ENCODE measurements at regions of chr14 and their contacts with region 1.

Region 1: DNA sequence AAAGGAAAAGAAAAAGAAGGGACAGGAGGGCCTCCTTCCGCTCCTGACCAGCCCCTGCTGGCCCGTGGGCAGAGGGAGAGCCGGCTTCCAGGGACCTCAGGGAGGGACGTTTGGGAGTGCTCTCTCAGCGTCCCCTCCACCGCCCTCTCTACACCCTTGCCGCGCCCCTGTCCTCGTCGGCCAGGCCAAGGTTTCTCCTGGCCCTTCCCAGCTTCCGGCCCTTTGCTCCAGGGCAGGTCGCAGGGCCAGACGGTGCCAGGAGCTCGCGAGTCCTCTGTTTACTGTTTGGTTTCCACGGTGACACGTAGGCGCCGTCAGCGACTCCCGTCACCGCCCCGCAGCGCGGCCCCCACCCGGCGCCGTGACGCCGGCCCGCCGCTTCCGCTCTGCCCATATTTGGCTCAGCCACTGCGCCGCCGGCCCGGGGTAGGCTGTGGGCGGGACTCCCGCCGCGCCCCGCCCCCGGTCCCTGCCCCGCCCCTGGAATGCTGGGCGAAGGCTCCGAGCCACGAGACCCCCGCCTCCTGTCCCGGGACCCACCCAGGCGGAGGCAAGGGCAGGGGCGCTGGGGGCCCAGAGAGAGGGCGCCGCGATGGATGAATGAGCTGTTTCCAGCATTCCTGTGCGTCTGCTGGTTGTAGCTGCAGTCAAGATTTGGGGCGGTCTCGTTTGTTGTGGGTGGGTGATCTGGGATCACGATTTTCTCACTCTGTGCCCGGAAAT is 15.5 kb downstream of the FOS start:
- DNase-seq: peak; percentile 93 to 97 (median 96)
- H3K4me3 ChIP-seq: peak overlapping the region; percentile 47 to 68
- H3K4me3 Mint-ChIP-seq: peak overlapping the region; percentile 83 to 97 (median 92)
- H3K27ac ChIP-seq: peak overlapping the region; percentile 90
- H3K27ac Mint-ChIP-seq: peak overlapping the region; percentile 84 to 99 (median 98)
- H3K4me1 ChIP-seq: peaks cover 30% of the 10 kb centered on the region
- H3K4me1 Mint-ChIP-seq: peaks cover 10 to 28% (median 22%) of the 10 kb centered on the region in 4 donors
- H3K27me3 ChIP-seq: no peaks in the 10 kb centered on the region
- H3K27me3 Mint-ChIP-seq: peaks cover 0 to 1% of the 10 kb centered on the region in 2 donors

Region 2: DNA sequence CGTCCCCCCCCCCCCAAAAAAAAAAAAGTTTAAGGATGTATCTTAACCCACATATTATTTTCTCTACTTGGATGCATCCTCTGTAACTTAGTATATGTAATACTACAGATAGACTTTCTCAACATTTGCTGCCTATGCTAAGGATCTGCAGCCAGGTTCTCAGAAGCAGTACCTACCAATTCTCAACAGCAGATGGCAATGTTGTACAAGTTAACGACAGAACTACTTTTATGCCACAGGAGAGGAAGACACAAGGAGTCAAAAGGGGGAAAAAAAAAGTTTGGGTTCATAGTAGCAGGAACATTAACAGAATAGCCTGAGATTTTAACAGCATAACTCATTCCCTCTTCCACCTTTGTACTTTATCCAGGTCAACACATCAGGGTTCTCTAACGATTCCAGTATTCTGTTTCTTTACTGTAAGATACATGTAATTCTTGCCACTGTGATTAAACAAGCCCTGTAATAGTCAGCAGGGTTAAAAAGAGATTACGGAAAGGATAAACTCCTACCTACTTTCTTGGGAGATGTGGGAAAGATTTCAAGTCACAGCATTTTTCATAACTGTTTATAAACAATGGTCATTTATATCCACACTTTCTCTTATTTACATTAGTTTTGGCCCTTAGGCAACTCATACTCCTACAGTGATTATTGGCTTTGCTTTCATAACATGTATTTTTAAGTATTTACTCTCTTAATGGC is 161.5 kb before region 1 on chr14:
- CTCF ChIA-PET with region 1: interaction called, 273 read pairs
- POLR2A ChIA-PET with region 1: interaction called, 4 read pairs
- intact Hi-C with region 1: loop called (anchors 1 kb)
- DNase-seq: peak; percentile 65 to 76 (median 74)
- H3K4me3 ChIP-seq: no peak overlapping the region
- H3K4me3 Mint-ChIP-seq: peak overlapping the region in 1 of 8 donors; percentile 5
- H3K27ac ChIP-seq: no peak overlapping the region
- H3K27ac Mint-ChIP-seq: peak overlapping the region; percentile 10 to 90 (median 72)
- H3K4me1 ChIP-seq: peaks cover 12% of the 10 kb centered on the region
- H3K4me1 Mint-ChIP-seq: peaks cover 13 to 18% (median 17%) of the 10 kb centered on the region in 4 donors
- H3K27me3 ChIP-seq: no peaks in the 10 kb centered on the region
- H3K27me3 Mint-ChIP-seq: no peaks in the 10 kb centered on the region

Region 3: DNA sequence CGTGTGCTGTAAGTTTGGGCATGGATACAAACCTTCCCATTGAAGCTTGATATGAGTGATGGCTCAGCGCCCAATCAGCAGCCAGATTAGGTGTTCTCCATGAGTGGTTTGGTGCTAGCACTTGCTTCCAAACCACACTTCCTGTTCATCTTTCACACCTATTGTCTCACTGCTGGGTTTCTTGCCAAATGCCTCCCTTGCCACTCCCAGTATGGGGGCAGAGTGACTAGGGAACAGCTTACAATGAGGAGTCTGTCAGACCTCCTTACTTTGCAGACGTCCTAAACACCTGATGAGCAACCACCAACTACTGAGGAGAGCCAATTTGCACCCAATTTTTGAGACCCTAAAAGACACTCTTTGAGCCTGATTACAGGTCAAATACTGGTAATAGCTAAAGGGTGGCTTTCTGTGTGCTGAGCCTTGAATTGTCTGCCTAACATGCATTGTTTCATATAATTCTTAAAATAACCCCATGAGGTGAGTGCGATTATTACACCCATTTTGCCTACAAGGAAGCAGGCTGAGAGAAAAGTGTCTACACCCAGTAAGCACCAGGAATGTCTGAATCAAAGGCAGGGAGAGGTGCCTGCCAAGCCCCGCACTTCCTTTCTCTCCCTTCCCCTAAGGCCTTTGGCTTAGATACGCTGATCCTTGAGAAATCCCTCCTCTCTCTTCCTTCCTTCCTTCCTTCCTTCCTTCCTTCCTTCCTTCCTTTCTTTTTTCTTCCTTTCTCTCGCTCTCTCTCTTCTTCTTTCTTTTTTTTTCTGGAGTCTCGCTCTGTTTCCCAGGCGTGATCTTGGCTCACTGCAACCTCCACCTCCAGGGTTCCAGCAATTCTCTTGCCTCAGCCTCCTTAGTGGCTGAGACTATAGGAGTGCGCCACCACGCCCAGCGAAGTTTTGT is 63.7 kb before region 1 on chr14:
- CTCF ChIA-PET with region 1: interaction called, 132 read pairs
- POLR2A ChIA-PET with region 1: interaction called, 34 read pairs
- intact Hi-C with region 1: loop called (anchors 1 kb)
- DNase-seq: peak; percentile 64 to 87 (median 75)
- H3K4me3 ChIP-seq: no peak overlapping the region
- H3K4me3 Mint-ChIP-seq: peak overlapping the region in 7 of 8 donors; percentile 47 to 87 (median 76)
- H3K27ac ChIP-seq: peak overlapping the region; percentile 47
- H3K27ac Mint-ChIP-seq: peak overlapping the region; percentile 85 to 97 (median 94)
- H3K4me1 ChIP-seq: peaks cover 43% of the 10 kb centered on the region
- H3K4me1 Mint-ChIP-seq: peaks cover 36 to 63% (median 53%) of the 10 kb centered on the region in 4 donors
- H3K27me3 ChIP-seq: no peaks in the 10 kb centered on the region
- H3K27me3 Mint-ChIP-seq: no peaks in the 10 kb centered on the region

Region 4: DNA sequence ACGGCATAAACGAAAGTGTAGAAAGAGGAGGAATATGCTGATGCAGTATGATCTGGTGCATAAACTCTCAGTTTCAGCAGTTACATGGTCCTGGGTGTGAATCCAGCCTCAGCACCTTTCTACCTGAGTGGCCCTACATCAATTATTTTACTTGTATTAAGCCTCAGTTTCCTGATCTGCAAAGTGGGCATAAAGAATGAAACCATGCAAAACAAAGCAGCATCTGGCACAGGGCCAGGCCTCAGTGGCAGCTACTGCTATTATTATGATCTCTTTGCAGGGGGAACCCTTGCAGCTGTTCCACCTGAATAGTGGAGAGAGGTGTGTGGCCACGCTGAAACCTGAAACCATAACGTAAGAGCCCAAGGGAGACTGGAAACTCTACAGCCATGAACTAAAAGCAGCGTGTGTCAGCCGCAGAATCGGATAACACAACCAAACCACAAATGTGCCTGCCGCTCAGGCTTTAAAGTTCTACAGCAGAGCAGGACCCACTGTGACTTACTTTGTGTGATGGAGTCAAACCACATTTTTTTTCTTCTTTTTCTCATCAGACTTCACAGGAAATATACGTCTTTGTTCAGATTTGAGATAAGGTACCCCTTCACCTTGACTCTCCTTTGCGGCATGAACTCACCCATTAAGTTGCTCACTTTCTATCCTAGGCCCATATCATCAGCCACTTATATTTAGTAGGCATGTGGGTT is 44.7 kb before region 1 on chr14:
- CTCF ChIA-PET with region 1: interaction called, 22 read pairs
- POLR2A ChIA-PET with region 1: interaction called, 31 read pairs
- intact Hi-C with region 1: loop called (anchors 1 kb)
- DNase-seq: peak; percentile 90 to 96 (median 95)
- H3K4me3 ChIP-seq: peak overlapping the region in 1 of 2 donors; percentile 54
- H3K4me3 Mint-ChIP-seq: peak overlapping the region; percentile 63 to 85 (median 78)
- H3K27ac ChIP-seq: peak overlapping the region; percentile 80
- H3K27ac Mint-ChIP-seq: peak overlapping the region; percentile 92 to 99 (median 97)
- H3K4me1 ChIP-seq: peaks cover 58% of the 10 kb centered on the region
- H3K4me1 Mint-ChIP-seq: peaks cover 38 to 70% (median 56%) of the 10 kb centered on the region in 4 donors
- H3K27me3 ChIP-seq: no peaks in the 10 kb centered on the region
- H3K27me3 Mint-ChIP-seq: no peaks in the 10 kb centered on the region

Region 5: DNA sequence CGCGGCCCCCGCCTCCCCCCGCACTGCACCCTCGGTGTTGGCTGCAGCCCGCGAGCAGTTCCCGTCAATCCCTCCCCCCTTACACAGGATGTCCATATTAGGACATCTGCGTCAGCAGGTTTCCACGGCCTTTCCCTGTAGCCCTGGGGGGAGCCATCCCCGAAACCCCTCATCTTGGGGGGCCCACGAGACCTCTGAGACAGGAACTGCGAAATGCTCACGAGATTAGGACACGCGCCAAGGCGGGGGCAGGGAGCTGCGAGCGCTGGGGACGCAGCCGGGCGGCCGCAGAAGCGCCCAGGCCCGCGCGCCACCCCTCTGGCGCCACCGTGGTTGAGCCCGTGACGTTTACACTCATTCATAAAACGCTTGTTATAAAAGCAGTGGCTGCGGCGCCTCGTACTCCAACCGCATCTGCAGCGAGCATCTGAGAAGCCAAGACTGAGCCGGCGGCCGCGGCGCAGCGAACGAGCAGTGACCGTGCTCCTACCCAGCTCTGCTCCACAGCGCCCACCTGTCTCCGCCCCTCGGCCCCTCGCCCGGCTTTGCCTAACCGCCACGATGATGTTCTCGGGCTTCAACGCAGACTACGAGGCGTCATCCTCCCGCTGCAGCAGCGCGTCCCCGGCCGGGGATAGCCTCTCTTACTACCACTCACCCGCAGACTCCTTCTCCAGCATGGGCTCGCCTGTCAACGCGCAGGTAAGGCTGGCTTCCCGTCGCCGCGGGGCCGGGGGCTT is 15.5 kb before region 1 on chr14 and contains the start of gene FOS:
- CTCF ChIA-PET with region 1: interaction called, 11 read pairs
- POLR2A ChIA-PET with region 1: interaction called, 27 read pairs
- intact Hi-C with region 1: loop called (anchors 1 kb)
- DNase-seq: peak; percentile 97 to 99 (median 98)
- H3K4me3 ChIP-seq: peak within 1 kb of the TSS; percentile 89 to 95
- H3K4me3 Mint-ChIP-seq: peak within 1 kb of the TSS; percentile 90 to 98 (median 94)
- H3K27ac ChIP-seq: peak within 1 kb of the TSS; percentile 75
- H3K27ac Mint-ChIP-seq: peak within 1 kb of the TSS; percentile 98 to 100 (median 99)
- H3K4me1 ChIP-seq: peaks cover 56% of the 10 kb centered on the region
- H3K4me1 Mint-ChIP-seq: peaks cover 41 to 88% (median 53%) of the 10 kb centered on the region in 4 donors
- H3K27me3 ChIP-seq: peaks cover 6% of the 10 kb centered on the region
- H3K27me3 Mint-ChIP-seq: peaks cover 0 to 24% of the 10 kb centered on the region in 2 donors
- total RNA-seq, gene FOS: 4.1 to 4.3 TPM

Region 6: GRCh38 chr14:75959031-75959430 is 665.0 kb after region 1 on chr14:
- CTCF ChIA-PET with region 1: no interaction called
- POLR2A ChIA-PET with region 1: no interaction called
- intact Hi-C with region 1: no loop called
- DNase-seq: no peak
- H3K4me3 ChIP-seq: no peak overlapping the region
- H3K4me3 Mint-ChIP-seq: no peak overlapping the region
- H3K27ac ChIP-seq: no peak overlapping the region
- H3K27ac Mint-ChIP-seq: no peak overlapping the region
- H3K4me1 ChIP-seq: no peaks in the 10 kb centered on the region
- H3K4me1 Mint-ChIP-seq: no peaks in the 10 kb centered on the region
- H3K27me3 ChIP-seq: no peaks in the 10 kb centered on the region
- H3K27me3 Mint-ChIP-seq: no peaks in the 10 kb centered on the region

Measured in CD4-positive, alpha-beta memory T cell (primary cell).